ENCODE measurements at regions of chr14 and their contacts with region 1.

Region 1: DNA sequence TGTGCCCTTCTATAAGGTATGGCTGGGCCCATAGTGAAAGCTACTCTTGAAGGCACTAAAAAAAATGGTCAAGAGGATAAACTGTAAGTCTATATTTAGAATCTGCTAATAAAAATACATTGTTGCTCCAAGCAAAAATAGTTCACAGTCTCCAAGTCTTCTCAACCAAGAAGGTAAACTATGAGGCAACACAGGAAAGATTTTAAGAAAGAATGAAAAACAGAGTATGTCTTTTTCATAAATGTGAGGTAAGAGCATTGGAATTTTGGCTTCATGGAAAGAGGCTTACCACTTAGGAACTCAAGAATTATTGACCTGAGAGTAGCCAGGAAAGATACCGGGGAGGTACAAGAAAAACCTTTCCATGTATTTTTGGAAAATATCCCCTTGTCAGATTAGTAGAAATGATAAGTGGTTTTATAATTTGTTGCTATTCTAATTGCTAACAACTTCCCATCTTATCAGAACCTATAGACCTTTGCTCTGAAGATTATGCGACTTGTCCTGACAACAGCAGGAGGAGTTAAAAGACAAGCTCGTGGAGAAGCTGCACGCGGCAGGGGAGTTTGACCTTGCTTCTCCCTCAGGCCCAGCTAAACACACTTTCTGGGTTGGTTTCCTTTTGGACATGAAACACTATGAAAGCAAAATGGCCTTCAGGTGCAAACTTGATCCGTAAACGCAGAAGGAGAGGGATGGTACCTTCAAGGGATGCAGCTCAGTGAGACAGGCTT is 238.1 kb downstream of the FOXN3 start:
- DNase-seq: peak; percentile 7
- ATAC-seq: no peak
- H3K4me3 ChIP-seq: no peak overlapping the region
- H3K27ac ChIP-seq: no peak overlapping the region
- H3K4me1 ChIP-seq: no peaks in the 10 kb centered on the region
- H3K27me3 ChIP-seq: no peaks in the 10 kb centered on the region
- CTCF ChIP-seq: no peak

Region 2: GRCh38 chr14:89137514-89138163 is 41.3 kb before region 1 on chr14:
- CTCF ChIA-PET with region 1: no interaction called
- POLR2A ChIA-PET with region 1: no interaction called
- intact Hi-C with region 1: loop called (anchors 2 kb)
- DNase-seq: peak; percentile 98
- ATAC-seq: peak; percentile 98
- H3K4me3 ChIP-seq: no peak overlapping the region
- H3K27ac ChIP-seq: no peak overlapping the region
- H3K4me1 ChIP-seq: peaks cover 20% of the 10 kb centered on the region
- H3K27me3 ChIP-seq: peaks cover 7% of the 10 kb centered on the region; the same call in 1 of the 2 replicates
- CTCF ChIP-seq: no peak

Region 3: GRCh38 chr14:89378119-89378518 is 199.2 kb after region 1 on chr14:
- CTCF ChIA-PET with region 1: no interaction called
- POLR2A ChIA-PET with region 1: no interaction called
- intact Hi-C with region 1: no loop called
- DNase-seq: no peak
- ATAC-seq: no peak
- H3K4me3 ChIP-seq: no peak overlapping the region
- H3K27ac ChIP-seq: no peak overlapping the region
- H3K4me1 ChIP-seq: no peaks in the 10 kb centered on the region
- H3K27me3 ChIP-seq: no peaks in the 10 kb centered on the region
- CTCF ChIP-seq: no peak

Region 4: GRCh38 chr14:89430391-89431236 is 251.6 kb after region 1 on chr14:
- CTCF ChIA-PET with region 1: no interaction called
- POLR2A ChIA-PET with region 1: no interaction called
- intact Hi-C with region 1: no loop called
- DNase-seq: no peak
- ATAC-seq: no peak
- H3K4me3 ChIP-seq: no peak overlapping the region
- H3K27ac ChIP-seq: no peak overlapping the region
- H3K4me1 ChIP-seq: peaks cover 14% of the 10 kb centered on the region
- H3K27me3 ChIP-seq: no peaks in the 10 kb centered on the region
- CTCF ChIP-seq: no peak

Region 5: GRCh38 chr14:89466484-89466883 is 287.5 kb after region 1 on chr14:
- CTCF ChIA-PET with region 1: no interaction called
- POLR2A ChIA-PET with region 1: no interaction called
- intact Hi-C with region 1: no loop called
- DNase-seq: no peak
- ATAC-seq: no peak
- H3K4me3 ChIP-seq: no peak overlapping the region
- H3K27ac ChIP-seq: no peak overlapping the region
- H3K4me1 ChIP-seq: no peaks in the 10 kb centered on the region
- H3K27me3 ChIP-seq: no peaks in the 10 kb centered on the region
- CTCF ChIP-seq: no peak

Measured in PC-3 (cell line).